Gastrocnemius medialis (tissue), 4 donors: ENCODE measurements at regions of chr6 and their contacts with region 1.

Region 1: DNA sequence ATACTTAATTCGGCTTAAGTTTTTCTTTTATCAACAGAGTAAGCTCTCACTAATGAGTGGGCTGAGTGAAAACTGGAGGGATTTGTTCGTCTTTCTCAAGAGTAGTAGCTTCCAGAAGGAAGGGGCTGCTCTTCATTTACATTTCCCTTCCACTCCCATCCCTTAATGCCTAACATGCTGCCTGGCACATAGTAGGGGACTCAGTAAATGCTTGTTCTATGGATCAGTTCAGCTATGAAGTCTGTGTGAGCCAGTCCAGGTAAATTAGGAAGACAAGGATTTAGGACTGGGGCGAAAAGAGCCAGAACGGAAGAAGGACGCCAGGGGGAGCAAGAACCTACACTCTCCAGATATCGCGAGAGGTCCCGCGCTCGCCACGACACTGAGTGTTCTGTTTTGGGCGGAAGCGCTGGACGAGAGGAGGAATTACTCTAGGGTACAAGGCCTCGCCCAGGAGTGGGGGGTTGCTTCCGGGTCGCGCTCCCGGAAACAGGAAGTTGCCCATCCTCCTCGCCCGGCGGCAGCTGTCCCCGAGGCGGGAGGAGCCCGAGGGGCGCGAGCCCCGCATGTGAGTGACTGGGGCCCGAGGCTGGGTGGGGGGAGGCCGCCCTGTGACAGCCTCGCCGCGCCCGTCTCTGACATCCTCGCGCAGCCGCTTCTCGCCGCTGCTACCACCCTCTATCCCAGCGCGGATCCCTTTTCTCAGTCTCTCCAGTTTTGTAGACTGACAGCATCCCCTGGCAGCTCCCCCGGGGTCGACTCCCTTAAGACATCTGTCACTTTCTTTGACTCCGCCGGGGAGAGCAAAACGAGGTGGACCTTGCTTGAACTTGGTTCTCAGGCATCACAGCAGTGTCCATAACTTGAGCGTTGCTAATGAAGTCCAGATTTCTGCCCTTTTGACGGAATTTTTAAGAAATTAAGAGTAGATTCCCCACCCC is at the start of gene C6orf89:
- DNase-seq: peak; percentile 97 to 99
- ATAC-seq: peak; percentile 100
- H3K4me3 ChIP-seq: peak within 1 kb of the TSS; percentile 75 to 92 (median 83)
- H3K27ac ChIP-seq: peak within 1 kb of the TSS; percentile 83 to 91 (median 90)
- H3K4me1 ChIP-seq: peaks cover 24 to 25% of the 10 kb centered on the region in 2 donors
- H3K27me3 ChIP-seq: no peaks in the 10 kb centered on the region
- CTCF ChIP-seq: peak; percentile 85 to 95 (median 91)
- POLR2A ChIP-seq: peak; percentile 80 to 94
- total RNA-seq, gene C6orf89: 30.8 to 53.2 (median 38.8) TPM

Region 2: GRCh38 chr6:36720251-36721141 is 165.2 kb before region 1 on chr6:
- in situ Hi-C with region 1: no loop called
- intact Hi-C with region 1: no loop called
- DNase-seq: no peak
- ATAC-seq: no peak
- H3K4me3 ChIP-seq: no peak overlapping the region
- H3K27ac ChIP-seq: no peak overlapping the region
- H3K4me1 ChIP-seq: no peaks in the 10 kb centered on the region
- H3K27me3 ChIP-seq: no peaks in the 10 kb centered on the region
- CTCF ChIP-seq: no peak
- POLR2A ChIP-seq: no peak

Region 3: GRCh38 chr6:36839749-36840431 is 45.8 kb before region 1 on chr6:
- in situ Hi-C with region 1: no loop called
- intact Hi-C with region 1: no loop called
- DNase-seq: no peak
- ATAC-seq: peak; percentile 13 to 14
- H3K4me3 ChIP-seq: peak overlapping the region; percentile 45 to 68 (median 49)
- H3K27ac ChIP-seq: peak overlapping the region in 2 of 4 donors; percentile 48 to 69
- H3K4me1 ChIP-seq: peaks cover 43 to 53% of the 10 kb centered on the region in 2 donors
- H3K27me3 ChIP-seq: peaks cover 0 to 3% (median 0%) of the 10 kb centered on the region in 3 donors
- CTCF ChIP-seq: no peak
- POLR2A ChIP-seq: no peak

Region 4: DNA sequence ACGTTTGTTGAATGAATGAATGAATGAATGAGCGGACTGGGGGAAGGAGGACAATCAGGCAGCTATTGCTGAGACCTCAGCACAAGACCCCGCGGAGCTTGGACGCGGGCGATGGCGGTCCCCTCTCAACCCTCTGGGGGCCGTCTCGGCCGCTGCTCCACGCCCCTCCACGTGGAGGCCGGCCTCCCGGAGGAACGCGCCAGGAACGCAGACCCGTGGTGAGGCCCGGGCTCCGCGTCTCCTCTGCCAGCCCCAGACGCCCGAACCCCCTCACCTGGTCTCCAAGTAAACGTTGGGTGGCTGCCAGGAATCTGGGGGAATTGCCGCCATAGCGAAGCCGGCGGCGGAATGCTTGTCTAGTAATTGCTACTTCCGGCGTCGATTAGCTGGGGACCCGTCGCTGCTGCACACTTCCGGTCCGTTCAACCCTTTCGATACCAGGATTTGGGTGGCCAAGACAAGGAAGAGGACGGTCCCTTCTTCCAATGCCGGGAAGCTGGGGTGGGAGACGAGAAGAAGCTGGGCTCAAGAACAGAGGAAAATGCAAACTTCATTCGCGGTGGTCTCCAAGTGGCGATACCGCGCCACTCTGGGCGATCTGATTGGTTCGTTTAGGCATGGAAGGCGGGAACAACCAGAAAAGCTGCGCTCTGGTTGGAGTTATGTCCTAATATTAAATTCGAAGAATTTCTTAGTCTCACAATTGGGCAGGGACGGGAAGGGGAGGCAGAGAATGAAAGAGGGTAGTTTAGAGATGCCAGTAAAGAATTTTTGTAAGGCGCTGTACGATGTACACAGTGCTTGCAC is 11.1 kb before region 1 on chr6 and contains the start of gene PPIL1:
- in situ Hi-C with region 1: no loop called
- intact Hi-C with region 1: loop called (anchors 1 kb)
- DNase-seq: peak; percentile 61 to 74
- ATAC-seq: peak; percentile 95 to 96
- H3K4me3 ChIP-seq: peak within 1 kb of the TSS; percentile 74 to 98 (median 91)
- H3K27ac ChIP-seq: peak within 1 kb of the TSS; percentile 81 to 93 (median 88)
- H3K4me1 ChIP-seq: peaks cover 11 to 20% of the 10 kb centered on the region in 2 donors
- H3K27me3 ChIP-seq: no peaks in the 10 kb centered on the region
- CTCF ChIP-seq: no peak
- POLR2A ChIP-seq: peak in 1 of 2 donors; percentile 50
- total RNA-seq, gene PPIL1: 5.4 to 18.7 (median 16.8) TPM

Region 5: GRCh38 chr6:36979347-36979742 is 93.6 kb after region 1 on chr6:
- in situ Hi-C with region 1: loop called in 1 of 4 experiments (anchors 10 kb)
- intact Hi-C with region 1: loop called (anchors 1 kb)
- DNase-seq: peak; percentile 26 to 62
- ATAC-seq: peak; percentile 63 to 68
- H3K4me3 ChIP-seq: no peak overlapping the region
- H3K27ac ChIP-seq: peak overlapping the region; percentile 44 to 70 (median 62)
- H3K4me1 ChIP-seq: peaks cover 41 to 47% of the 10 kb centered on the region in 2 donors
- H3K27me3 ChIP-seq: no peaks in the 10 kb centered on the region
- CTCF ChIP-seq: peak in 4 of 5 experiments; percentile 41 to 56 (median 48)
- POLR2A ChIP-seq: no peak

Region 6: DNA sequence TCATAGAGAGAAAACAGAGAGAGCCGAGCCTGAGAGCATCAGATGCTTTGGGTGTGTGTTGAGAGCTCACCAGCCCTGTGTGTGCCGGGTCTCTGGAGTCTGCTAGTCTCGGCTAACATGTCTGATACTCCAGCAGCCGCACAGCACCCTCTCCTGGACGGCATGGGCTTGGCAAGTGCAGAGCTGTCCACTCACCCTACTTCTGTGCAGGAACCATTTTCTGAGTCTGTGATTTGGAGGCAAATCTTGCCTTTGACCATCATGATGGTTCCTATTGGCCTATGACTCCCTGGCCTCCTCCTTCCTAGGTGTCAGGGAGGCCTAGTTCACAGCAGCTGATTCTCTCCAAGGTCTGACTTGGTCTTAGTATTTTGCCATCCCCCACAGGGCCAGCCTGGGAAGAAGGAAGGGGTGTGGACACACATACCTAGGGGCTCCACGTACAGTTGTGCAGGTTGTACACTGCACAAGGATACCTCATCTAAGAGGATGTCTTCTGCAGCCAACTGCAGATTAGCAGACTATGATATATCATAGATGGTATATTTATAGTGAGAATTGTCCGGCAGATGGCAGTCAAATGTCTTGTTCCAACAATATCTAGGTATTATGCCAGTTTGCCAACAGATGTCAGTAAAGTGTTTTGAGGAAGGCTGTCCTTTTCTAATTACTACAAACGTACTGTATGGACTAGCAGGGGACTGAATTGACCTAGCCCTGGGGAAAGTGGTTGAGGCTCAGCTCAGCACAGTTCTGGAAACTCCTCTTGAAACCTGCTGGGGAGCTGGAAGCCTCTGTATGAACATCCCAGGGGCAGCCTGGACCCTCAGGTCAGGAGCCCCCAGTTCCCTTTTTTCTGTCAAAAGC is 132.7 kb after region 1 on chr6:
- in situ Hi-C with region 1: loop called in 3 of 4 experiments (anchors 10 to 25 kb)
- intact Hi-C with region 1: loop called (anchors 1 kb)
- DNase-seq: peak; percentile 79 to 90
- ATAC-seq: peak; percentile 96 to 98
- H3K4me3 ChIP-seq: no peak overlapping the region
- H3K27ac ChIP-seq: peak overlapping the region; percentile 40 to 67 (median 56)
- H3K4me1 ChIP-seq: peaks cover 9 to 11% of the 10 kb centered on the region in 2 donors
- H3K27me3 ChIP-seq: no peaks in the 10 kb centered on the region
- CTCF ChIP-seq: peak; percentile 84 to 95 (median 91)
- POLR2A ChIP-seq: no peak

Region 7: DNA sequence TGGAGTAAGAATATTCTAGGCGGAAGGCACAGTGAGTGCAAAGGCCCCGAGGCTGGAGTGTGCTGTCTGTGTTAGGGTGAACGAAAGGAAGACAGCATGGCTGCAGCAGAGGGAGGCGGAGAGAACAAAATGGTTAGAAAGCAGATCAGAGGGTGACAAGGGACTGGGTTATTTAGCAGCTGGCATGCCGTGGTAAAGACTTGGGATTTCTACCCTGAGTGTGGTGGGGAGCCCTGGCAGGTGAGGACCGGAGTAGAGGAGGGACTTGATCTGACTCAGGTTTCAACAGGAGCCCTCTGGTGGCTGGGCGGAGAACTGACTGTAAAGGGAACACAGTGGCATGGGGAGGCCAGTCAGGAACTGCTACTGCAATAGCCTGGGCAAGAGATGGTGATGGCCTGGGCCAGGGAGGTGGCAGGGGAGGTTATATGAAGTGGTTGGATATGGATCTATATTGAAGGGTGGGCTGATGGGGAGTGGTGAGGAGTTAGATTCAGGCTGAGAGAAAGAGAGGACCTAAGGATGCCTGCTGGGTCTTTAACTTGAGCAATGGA is 322.2 kb after region 1 on chr6:
- in situ Hi-C with region 1: loop called (anchors 10 to 25 kb)
- intact Hi-C with region 1: loop called (anchors 2 kb)
- DNase-seq: peak; percentile 44 to 72
- ATAC-seq: peak in 1 of 2 donors; percentile 63
- H3K4me3 ChIP-seq: no peak overlapping the region
- H3K27ac ChIP-seq: no peak overlapping the region
- H3K4me1 ChIP-seq: peaks cover 0 to 7% of the 10 kb centered on the region in 2 donors
- H3K27me3 ChIP-seq: no peaks in the 10 kb centered on the region
- CTCF ChIP-seq: peak; percentile 50 to 79 (median 69)
- POLR2A ChIP-seq: no peak